CD4-positive, alpha-beta T cell (primary cell): ENCODE measurements at regions of chr13 and their contacts with region 1.

Region 1: GRCh38 chr13:48532506-48533499 is at the start of gene RCBTB2:
- DNase-seq: peak; percentile 95 to 100 (median 99)
- ATAC-seq: peak; percentile 88
- H3K4me3 ChIP-seq: peak within 1 kb of the TSS; percentile 94
- H3K4me3 Mint-ChIP-seq: peak within 1 kb of the TSS; percentile 97
- H3K27ac ChIP-seq: peak within 1 kb of the TSS; percentile 93 to 96
- H3K27ac Mint-ChIP-seq: peak within 1 kb of the TSS; percentile 90
- H3K4me1 ChIP-seq: peaks cover 31% of the 10 kb centered on the region
- H3K4me1 Mint-ChIP-seq: peaks cover 30% of the 10 kb centered on the region
- H3K27me3 ChIP-seq: no peaks in the 10 kb centered on the region
- H3K27me3 Mint-ChIP-seq: no peaks in the 10 kb centered on the region
- CTCF ChIP-seq: no peak
- total RNA-seq, gene RCBTB2: 6.1 to 6.5 TPM

Region 2: DNA sequence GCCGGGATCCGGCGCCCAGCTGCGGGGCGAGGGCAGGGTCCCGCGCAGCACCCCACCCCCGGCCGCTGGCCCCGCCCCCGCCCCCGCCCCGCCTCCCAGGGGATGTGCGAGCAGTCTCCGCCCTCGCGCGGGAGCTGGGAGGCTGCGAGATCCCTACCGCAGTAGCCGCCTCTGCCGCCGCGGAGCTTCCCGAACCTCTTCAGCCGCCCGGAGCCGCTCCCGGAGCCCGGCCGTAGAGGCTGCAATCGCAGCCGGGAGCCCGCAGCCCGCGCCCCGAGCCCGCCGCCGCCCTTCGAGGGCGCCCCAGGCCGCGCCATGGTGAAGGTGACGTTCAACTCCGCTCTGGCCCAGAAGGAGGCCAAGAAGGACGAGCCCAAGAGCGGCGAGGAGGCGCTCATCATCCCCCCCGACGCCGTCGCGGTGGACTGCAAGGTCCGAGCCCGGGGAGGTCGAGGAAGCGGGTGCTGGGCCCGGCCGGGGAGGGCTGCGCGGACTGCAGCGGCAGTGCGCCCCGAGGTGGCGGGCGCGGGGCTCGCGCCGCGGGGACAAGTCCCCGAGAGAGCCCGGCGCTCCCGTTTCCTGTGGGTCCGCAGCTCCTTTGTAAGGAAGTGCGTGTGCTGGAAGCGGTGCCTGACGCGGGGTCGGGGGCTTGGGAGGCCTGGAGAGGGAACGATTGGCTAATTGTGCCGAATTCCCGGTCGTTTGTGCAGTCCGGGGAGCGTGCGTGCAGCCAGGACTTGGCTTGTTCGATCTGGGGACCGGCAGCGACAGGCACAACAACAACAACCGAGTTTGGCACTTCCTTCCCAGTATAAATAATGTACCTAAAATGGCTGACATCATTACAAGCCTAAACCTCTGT is 299.5 kb before region 1 on chr13 and contains the start of gene ITM2B:
- CTCF ChIA-PET with region 1: no interaction called
- POLR2A ChIA-PET with region 1: interaction called, 10 read pairs
- intact Hi-C with region 1: no loop called
- DNase-seq: peak; percentile 44 to 86 (median 62)
- ATAC-seq: peak; percentile 70
- H3K4me3 ChIP-seq: peak within 1 kb of the TSS; percentile 93
- H3K4me3 Mint-ChIP-seq: peak within 1 kb of the TSS; percentile 98
- H3K27ac ChIP-seq: peak within 1 kb of the TSS; percentile 90 to 95
- H3K27ac Mint-ChIP-seq: peak within 1 kb of the TSS; percentile 97
- H3K4me1 ChIP-seq: peaks cover 22% of the 10 kb centered on the region
- H3K4me1 Mint-ChIP-seq: peaks cover 68% of the 10 kb centered on the region
- H3K27me3 ChIP-seq: no peaks in the 10 kb centered on the region
- H3K27me3 Mint-ChIP-seq: no peaks in the 10 kb centered on the region
- CTCF ChIP-seq: peak; percentile 68
- total RNA-seq, gene ITM2B: 305 to 323 TPM

Region 3: DNA sequence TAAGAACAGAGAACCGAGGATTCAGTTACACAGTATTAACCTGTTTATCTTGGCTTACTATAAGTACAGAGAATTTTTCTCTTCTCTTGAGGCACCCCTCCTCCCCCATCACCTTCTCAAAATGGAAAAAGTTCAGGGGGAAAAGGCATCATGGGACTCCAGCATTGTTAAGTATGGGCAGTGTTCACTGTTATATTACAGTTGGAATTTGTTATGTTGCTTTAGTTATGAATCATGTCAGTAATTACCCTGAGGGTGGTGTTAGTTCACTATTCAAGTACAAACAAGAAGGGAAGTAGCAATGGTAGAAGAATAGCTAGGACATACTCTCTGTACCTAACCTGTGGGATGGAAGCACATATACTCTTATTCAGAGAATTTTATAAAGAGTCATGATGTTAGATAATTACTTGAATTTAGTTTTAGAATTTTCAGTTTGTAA is 131.9 kb before region 1 on chr13:
- CTCF ChIA-PET with region 1: no interaction called
- POLR2A ChIA-PET with region 1: interaction called, 35 read pairs
- intact Hi-C with region 1: no loop called
- DNase-seq: peak in 3 of 14 experiments; percentile 41 to 60 (median 55)
- ATAC-seq: peak; percentile 68
- H3K4me3 ChIP-seq: peak overlapping the region; percentile 16
- H3K4me3 Mint-ChIP-seq: peak overlapping the region; percentile 13
- H3K27ac ChIP-seq: peak overlapping the region in 1 of 2 donors; percentile 26
- H3K27ac Mint-ChIP-seq: peak overlapping the region; percentile 37
- H3K4me1 ChIP-seq: peaks cover 25% of the 10 kb centered on the region
- H3K4me1 Mint-ChIP-seq: peaks cover 60% of the 10 kb centered on the region
- H3K27me3 ChIP-seq: no peaks in the 10 kb centered on the region
- H3K27me3 Mint-ChIP-seq: no peaks in the 10 kb centered on the region
- CTCF ChIP-seq: peak; percentile 48

Region 4: GRCh38 chr13:48443442-48444208 is 89.2 kb before region 1 on chr13:
- CTCF ChIA-PET with region 1: no interaction called
- POLR2A ChIA-PET with region 1: interaction called, 15 read pairs
- intact Hi-C with region 1: no loop called
- DNase-seq: peak in 1 of 14 experiments; percentile 21
- ATAC-seq: no peak
- H3K4me3 ChIP-seq: no peak overlapping the region
- H3K4me3 Mint-ChIP-seq: peak overlapping the region; percentile 15
- H3K27ac ChIP-seq: no peak overlapping the region
- H3K27ac Mint-ChIP-seq: peak overlapping the region; percentile 61
- H3K4me1 ChIP-seq: peaks cover 8% of the 10 kb centered on the region
- H3K4me1 Mint-ChIP-seq: peaks cover 26% of the 10 kb centered on the region
- H3K27me3 ChIP-seq: no peaks in the 10 kb centered on the region
- H3K27me3 Mint-ChIP-seq: no peaks in the 10 kb centered on the region
- CTCF ChIP-seq: no peak

Region 5: GRCh38 chr13:48505597-48506091 is 27.2 kb before region 1 on chr13:
- CTCF ChIA-PET with region 1: interaction called, 3 read pairs
- POLR2A ChIA-PET with region 1: interaction called, 132 read pairs
- intact Hi-C with region 1: loop called (anchors 1 to 2 kb)
- DNase-seq: peak in 12 of 14 experiments; percentile 27 to 91 (median 46)
- ATAC-seq: peak; percentile 93
- H3K4me3 ChIP-seq: no peak overlapping the region
- H3K4me3 Mint-ChIP-seq: peak overlapping the region; percentile 54
- H3K27ac ChIP-seq: peak overlapping the region; percentile 52 to 58
- H3K27ac Mint-ChIP-seq: peak overlapping the region; percentile 91
- H3K4me1 ChIP-seq: peaks cover 46% of the 10 kb centered on the region
- H3K4me1 Mint-ChIP-seq: peaks cover 55% of the 10 kb centered on the region
- H3K27me3 ChIP-seq: no peaks in the 10 kb centered on the region
- H3K27me3 Mint-ChIP-seq: no peaks in the 10 kb centered on the region
- CTCF ChIP-seq: no peak

Region 6: GRCh38 chr13:48562296-48563066 is 29.7 kb after region 1 on chr13:
- CTCF ChIA-PET with region 1: no interaction called
- POLR2A ChIA-PET with region 1: interaction called, 118 read pairs
- intact Hi-C with region 1: loop called in 1 of 2 experiments (anchors 2 kb)
- DNase-seq: peak; percentile 25 to 93 (median 52)
- ATAC-seq: peak; percentile 98
- H3K4me3 ChIP-seq: peak overlapping the region; percentile 8
- H3K4me3 Mint-ChIP-seq: peak overlapping the region; percentile 11
- H3K27ac ChIP-seq: no peak overlapping the region
- H3K27ac Mint-ChIP-seq: peak overlapping the region; percentile 6
- H3K4me1 ChIP-seq: peaks cover 19% of the 10 kb centered on the region
- H3K4me1 Mint-ChIP-seq: peaks cover 59% of the 10 kb centered on the region
- H3K27me3 ChIP-seq: no peaks in the 10 kb centered on the region
- H3K27me3 Mint-ChIP-seq: peaks cover 29% of the 10 kb centered on the region
- CTCF ChIP-seq: no peak

Region 7: GRCh38 chr13:48975856-48976575 is 443.2 kb after region 1 on chr13 and contains the start of gene FNDC3A:
- CTCF ChIA-PET with region 1: no interaction called
- POLR2A ChIA-PET with region 1: interaction called, 11 read pairs
- intact Hi-C with region 1: no loop called
- DNase-seq: peak; percentile 74 to 94 (median 82)
- ATAC-seq: peak; percentile 68
- H3K4me3 ChIP-seq: peak within 1 kb of the TSS; percentile 80
- H3K4me3 Mint-ChIP-seq: peak within 1 kb of the TSS; percentile 99
- H3K27ac ChIP-seq: peak within 1 kb of the TSS; percentile 95 to 97
- H3K27ac Mint-ChIP-seq: peak within 1 kb of the TSS; percentile 98
- H3K4me1 ChIP-seq: peaks cover 9% of the 10 kb centered on the region
- H3K4me1 Mint-ChIP-seq: peaks cover 54% of the 10 kb centered on the region
- H3K27me3 ChIP-seq: no peaks in the 10 kb centered on the region
- H3K27me3 Mint-ChIP-seq: no peaks in the 10 kb centered on the region
- CTCF ChIP-seq: no peak
- total RNA-seq, gene FNDC3A: 27.7 to 28.6 TPM

Region 8: DNA sequence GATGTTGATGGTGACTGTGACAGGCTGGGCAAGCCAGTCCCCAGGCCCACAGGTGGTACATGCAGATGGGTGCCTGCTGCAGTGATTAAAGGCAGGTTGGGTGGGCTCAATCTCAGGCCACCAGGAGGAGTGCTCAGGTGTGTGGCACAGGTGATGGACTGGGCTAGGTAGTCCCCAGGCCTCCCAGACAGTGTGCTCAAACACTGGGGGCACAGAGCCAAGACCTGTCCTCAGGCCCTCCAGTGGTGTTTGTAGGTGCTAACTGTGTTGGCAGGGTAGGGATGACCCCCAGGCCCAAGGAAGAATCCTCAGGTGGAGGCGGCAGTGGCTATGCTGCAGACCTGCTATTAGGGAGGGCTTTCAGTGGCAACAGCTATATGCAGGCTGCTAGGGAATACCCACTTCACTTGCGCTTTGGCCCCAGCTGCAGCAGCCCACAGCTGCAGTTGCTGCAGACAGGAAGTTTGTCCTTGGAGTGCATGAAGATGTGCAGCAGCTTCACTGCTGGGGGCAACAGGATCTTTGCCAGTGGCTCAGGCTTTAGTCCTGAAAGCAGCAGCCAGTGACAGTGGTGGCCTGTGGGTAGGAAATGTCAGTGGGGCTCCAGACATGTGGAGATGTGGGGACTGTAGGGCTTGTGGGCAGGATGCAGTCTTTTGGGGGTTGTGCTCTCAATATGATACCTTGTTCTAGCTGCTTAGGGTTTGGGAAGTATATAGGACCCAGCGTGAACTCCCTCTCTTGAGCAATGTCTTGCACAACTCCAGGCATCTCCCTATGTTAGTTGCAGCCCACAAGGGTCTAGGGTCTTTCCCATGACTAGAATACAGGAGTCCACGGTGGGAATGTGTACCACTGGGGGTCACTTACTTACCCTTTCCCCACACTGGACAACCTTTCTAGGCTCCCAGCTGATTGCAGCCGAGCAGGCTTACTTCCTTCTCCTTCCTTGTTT is 633.3 kb after region 1 on chr13:
- CTCF ChIA-PET with region 1: no interaction called
- POLR2A ChIA-PET with region 1: no interaction called
- intact Hi-C with region 1: no loop called
- DNase-seq: no peak
- ATAC-seq: no peak
- H3K4me3 ChIP-seq: no peak overlapping the region
- H3K4me3 Mint-ChIP-seq: no peak overlapping the region
- H3K27ac ChIP-seq: no peak overlapping the region
- H3K27ac Mint-ChIP-seq: no peak overlapping the region
- H3K4me1 ChIP-seq: peaks cover 11% of the 10 kb centered on the region
- H3K4me1 Mint-ChIP-seq: peaks cover 15% of the 10 kb centered on the region
- H3K27me3 ChIP-seq: no peaks in the 10 kb centered on the region
- H3K27me3 Mint-ChIP-seq: no peaks in the 10 kb centered on the region
- CTCF ChIP-seq: no peak